ENCODE measurements at regions of chr1 and their contacts with region 1.

Region 1: DNA sequence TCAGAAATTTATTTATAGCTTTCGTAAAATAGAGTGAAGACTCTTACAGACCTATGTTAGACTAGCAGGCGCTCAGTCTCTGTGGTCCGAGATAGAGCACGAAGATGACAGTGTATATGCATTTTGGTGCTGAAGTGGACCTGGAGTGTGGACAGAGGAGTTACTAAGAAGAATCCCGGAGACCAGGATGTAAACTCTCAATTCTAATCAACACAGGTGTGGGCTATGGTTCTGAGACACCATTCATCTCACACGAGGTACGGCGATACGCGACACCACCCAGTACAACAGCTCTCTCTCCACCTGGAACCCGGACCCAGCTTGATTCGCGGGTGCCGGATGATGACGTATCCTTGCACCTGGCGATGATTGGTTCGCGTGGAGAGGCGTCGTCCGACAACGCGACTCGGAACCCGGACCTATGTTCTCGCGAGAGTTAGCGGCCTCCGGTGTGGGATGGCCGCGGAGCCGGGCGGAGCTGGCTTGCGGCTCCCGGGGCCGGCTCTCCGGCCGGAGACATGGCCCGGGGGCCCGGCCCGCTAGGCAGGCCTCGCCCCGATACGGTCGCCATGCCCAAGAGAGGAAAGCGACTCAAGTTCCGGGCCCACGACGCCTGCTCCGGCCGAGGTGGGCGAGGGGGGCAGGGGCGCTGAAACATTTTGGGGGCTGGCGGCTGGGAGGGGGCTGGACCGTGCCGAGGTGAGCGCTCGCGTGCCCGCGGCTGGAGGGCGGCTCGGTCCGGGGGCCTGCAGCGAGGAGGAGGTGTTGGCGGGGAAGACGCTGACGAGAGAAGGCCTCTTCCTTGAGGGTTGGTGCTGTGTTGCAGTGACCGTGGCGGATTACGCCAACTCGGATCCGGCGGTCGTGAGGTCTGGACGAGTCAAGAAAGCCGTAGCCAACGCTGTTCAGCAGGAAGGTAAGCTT is at the start of gene TMEM183A:
- DNase-seq: peak; percentile 91 to 98
- ATAC-seq: peak; percentile 93 to 96 (median 94)
- H3K4me3 ChIP-seq: peak within 1 kb of the TSS; percentile 98
- H3K4me3 Mint-ChIP-seq: peak within 1 kb of the TSS; percentile 96
- H3K27ac ChIP-seq: peak within 1 kb of the TSS; percentile 90
- H3K27ac Mint-ChIP-seq: peak within 1 kb of the TSS; percentile 97 to 98
- H3K4me1 ChIP-seq: peaks cover 14% of the 10 kb centered on the region
- H3K4me1 Mint-ChIP-seq: peaks cover 30 to 36% of the 10 kb centered on the region in 2 donors
- H3K27me3 ChIP-seq: no peaks in the 10 kb centered on the region
- H3K27me3 Mint-ChIP-seq: no peaks in the 10 kb centered on the region
- CTCF ChIP-seq: no peak
- total RNA-seq, gene TMEM183A: 127 to 147 (median 143) TPM

Region 2: GRCh38 chr1:202810615-202811295 is 196.5 kb before region 1 on chr1 and contains the start of gene PCAT6:
- intact Hi-C with region 1: loop called (anchors 5 kb)
- DNase-seq: peak; percentile 86 to 92
- ATAC-seq: peak; percentile 80 to 91 (median 87)
- H3K4me3 ChIP-seq: peak within 1 kb of the TSS; percentile 66
- H3K4me3 Mint-ChIP-seq: peak within 1 kb of the TSS; percentile 84
- H3K27ac ChIP-seq: peak within 1 kb of the TSS; percentile 73
- H3K27ac Mint-ChIP-seq: peak within 1 kb of the TSS; percentile 82 to 90
- H3K4me1 ChIP-seq: peaks cover 22% of the 10 kb centered on the region
- H3K4me1 Mint-ChIP-seq: peaks cover 34 to 53% of the 10 kb centered on the region in 2 donors
- H3K27me3 ChIP-seq: no peaks in the 10 kb centered on the region
- H3K27me3 Mint-ChIP-seq: no peaks in the 10 kb centered on the region
- CTCF ChIP-seq: no peak
- total RNA-seq, gene PCAT6: 1.1 to 1.5 TPM in 2 of 3 donors, not detected in the other

Region 3: GRCh38 chr1:202968840-202969295 is 38.3 kb before region 1 on chr1:
- intact Hi-C with region 1: loop called (anchors 2 kb)
- DNase-seq: peak in 1 of 2 donors; percentile 66
- ATAC-seq: peak; percentile 13 to 62 (median 23)
- H3K4me3 ChIP-seq: no peak overlapping the region
- H3K4me3 Mint-ChIP-seq: peak overlapping the region; percentile 55
- H3K27ac ChIP-seq: no peak overlapping the region
- H3K27ac Mint-ChIP-seq: peak overlapping the region in 1 of 2 donors; percentile 73
- H3K4me1 ChIP-seq: peaks cover 30% of the 10 kb centered on the region
- H3K4me1 Mint-ChIP-seq: peaks cover 25 to 27% of the 10 kb centered on the region in 2 donors
- H3K27me3 ChIP-seq: no peaks in the 10 kb centered on the region
- H3K27me3 Mint-ChIP-seq: peaks cover 0 to 5% of the 10 kb centered on the region in 2 donors
- CTCF ChIP-seq: peak; percentile 16

Region 4: DNA sequence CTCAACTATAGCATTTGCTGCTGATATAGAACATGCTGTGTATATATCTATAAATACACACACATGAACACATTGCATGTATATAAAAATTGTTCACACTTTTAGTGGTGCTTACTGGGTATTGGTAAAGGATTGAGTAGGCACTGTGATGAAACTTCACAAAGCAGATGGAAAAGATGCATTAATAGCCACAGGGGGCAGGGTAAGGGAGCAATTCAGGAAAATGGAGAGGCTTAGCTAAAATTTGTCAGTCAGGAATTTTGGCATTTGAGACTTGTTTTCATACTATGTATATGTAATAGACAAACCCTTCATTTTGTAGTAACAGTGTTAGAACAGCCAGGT is 18.4 kb after region 1 on chr1:
- intact Hi-C with region 1: loop called (anchors 2 kb)
- DNase-seq: no peak
- ATAC-seq: no peak
- H3K4me3 ChIP-seq: no peak overlapping the region
- H3K4me3 Mint-ChIP-seq: peak overlapping the region; percentile 79
- H3K27ac ChIP-seq: peak overlapping the region; percentile 60
- H3K27ac Mint-ChIP-seq: peak overlapping the region; percentile 74 to 81
- H3K4me1 ChIP-seq: peaks cover 16% of the 10 kb centered on the region
- H3K4me1 Mint-ChIP-seq: peaks cover 8% of the 10 kb centered on the region in 2 donors
- H3K27me3 ChIP-seq: peaks cover 4% of the 10 kb centered on the region
- H3K27me3 Mint-ChIP-seq: peaks cover 0 to 7% of the 10 kb centered on the region in 2 donors
- CTCF ChIP-seq: no peak